B cell (primary cell): ENCODE measurements at regions of chr7 and their contacts with region 1.

Region 1: GRCh38 chr7:100705753-100706671 is at the start of gene POP7:
- DNase-seq: peak; percentile 98
- ATAC-seq: peak; percentile 94
- H3K4me3 ChIP-seq: peak within 1 kb of the TSS; percentile 57 to 96 (median 87)
- H3K4me3 Mint-ChIP-seq: peak within 1 kb of the TSS; percentile 94
- H3K27ac ChIP-seq: peak within 1 kb of the TSS; percentile 79 to 86
- H3K27ac Mint-ChIP-seq: peak within 1 kb of the TSS; percentile 96
- H3K4me1 ChIP-seq: peaks cover 8 to 20% of the 10 kb centered on the region in 2 donors
- H3K4me1 Mint-ChIP-seq: peaks cover 20% of the 10 kb centered on the region
- H3K27me3 ChIP-seq: no peaks in the 10 kb centered on the region
- H3K27me3 Mint-ChIP-seq: no peaks in the 10 kb centered on the region
- CTCF ChIP-seq: no peak
- total RNA-seq, gene POP7: 13.0 and 14.4 TPM in 2 replicates

Region 2: GRCh38 chr7:100400656-100401055 is 305.4 kb before region 1 on chr7:
- CTCF ChIA-PET with region 1: no interaction called
- POLR2A ChIA-PET with region 1: no interaction called
- intact Hi-C with region 1: no loop called
- DNase-seq: no peak
- ATAC-seq: no peak
- H3K4me3 ChIP-seq: no peak overlapping the region
- H3K4me3 Mint-ChIP-seq: no peak overlapping the region
- H3K27ac ChIP-seq: no peak overlapping the region
- H3K27ac Mint-ChIP-seq: no peak overlapping the region
- H3K4me1 ChIP-seq: peaks cover 15 to 26% of the 10 kb centered on the region in 2 donors
- H3K4me1 Mint-ChIP-seq: peaks cover 26% of the 10 kb centered on the region
- H3K27me3 ChIP-seq: no peaks in the 10 kb centered on the region
- H3K27me3 Mint-ChIP-seq: no peaks in the 10 kb centered on the region
- CTCF ChIP-seq: no peak

Region 3: DNA sequence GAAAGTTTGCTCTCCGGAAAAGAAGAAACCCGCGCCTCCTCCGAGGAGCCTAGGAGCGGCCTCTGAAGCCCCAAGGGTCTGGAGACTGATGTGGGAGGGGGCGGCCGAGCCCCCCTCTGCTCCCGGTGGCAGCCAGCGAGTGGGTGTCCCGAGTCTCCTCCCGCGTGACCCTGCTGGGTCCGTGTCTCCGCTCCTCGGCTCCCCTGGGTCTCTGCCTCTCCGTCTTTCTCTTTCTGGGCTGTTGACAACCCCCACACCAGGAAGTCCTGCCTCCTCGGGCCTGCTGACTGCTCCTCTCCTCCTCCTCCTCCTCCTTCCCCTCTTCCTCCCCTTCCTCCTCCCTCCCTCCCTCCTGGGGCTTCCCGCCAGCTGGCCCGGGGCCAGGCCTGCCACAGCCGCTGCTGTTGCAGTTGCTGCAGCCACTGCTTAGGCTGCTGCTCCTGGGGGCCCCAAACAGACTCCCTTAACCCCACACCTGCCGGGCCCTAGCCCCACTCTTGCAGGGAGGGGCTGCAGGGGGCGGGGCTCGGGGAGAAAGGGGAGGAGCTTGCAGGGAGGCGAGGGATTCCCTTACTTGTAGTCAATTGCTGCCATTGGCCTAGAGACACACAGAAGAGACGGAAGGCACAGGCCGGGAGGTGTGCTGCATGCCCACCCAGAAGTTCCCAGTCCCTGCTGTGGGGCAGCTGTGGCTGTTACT is 226.9 kb before region 1 on chr7 and contains the start of gene TSC22D4:
- CTCF ChIA-PET with region 1: interaction called, 4 read pairs
- POLR2A ChIA-PET with region 1: interaction called, 6 read pairs
- intact Hi-C with region 1: loop called (anchors 10 kb)
- DNase-seq: peak; percentile 92
- ATAC-seq: peak; percentile 70
- H3K4me3 ChIP-seq: peak within 1 kb of the TSS; percentile 90 to 99 (median 96)
- H3K4me3 Mint-ChIP-seq: peak within 1 kb of the TSS; percentile 97
- H3K27ac ChIP-seq: peak within 1 kb of the TSS; percentile 72 to 89
- H3K27ac Mint-ChIP-seq: peak within 1 kb of the TSS; percentile 91
- H3K4me1 ChIP-seq: peaks cover 34 to 51% of the 10 kb centered on the region in 2 donors
- H3K4me1 Mint-ChIP-seq: peaks cover 37% of the 10 kb centered on the region
- H3K27me3 ChIP-seq: no peaks in the 10 kb centered on the region
- H3K27me3 Mint-ChIP-seq: no peaks in the 10 kb centered on the region
- CTCF ChIP-seq: no peak
- total RNA-seq, gene TSC22D4: 92.8 and 95.0 TPM in 2 replicates

Region 4: DNA sequence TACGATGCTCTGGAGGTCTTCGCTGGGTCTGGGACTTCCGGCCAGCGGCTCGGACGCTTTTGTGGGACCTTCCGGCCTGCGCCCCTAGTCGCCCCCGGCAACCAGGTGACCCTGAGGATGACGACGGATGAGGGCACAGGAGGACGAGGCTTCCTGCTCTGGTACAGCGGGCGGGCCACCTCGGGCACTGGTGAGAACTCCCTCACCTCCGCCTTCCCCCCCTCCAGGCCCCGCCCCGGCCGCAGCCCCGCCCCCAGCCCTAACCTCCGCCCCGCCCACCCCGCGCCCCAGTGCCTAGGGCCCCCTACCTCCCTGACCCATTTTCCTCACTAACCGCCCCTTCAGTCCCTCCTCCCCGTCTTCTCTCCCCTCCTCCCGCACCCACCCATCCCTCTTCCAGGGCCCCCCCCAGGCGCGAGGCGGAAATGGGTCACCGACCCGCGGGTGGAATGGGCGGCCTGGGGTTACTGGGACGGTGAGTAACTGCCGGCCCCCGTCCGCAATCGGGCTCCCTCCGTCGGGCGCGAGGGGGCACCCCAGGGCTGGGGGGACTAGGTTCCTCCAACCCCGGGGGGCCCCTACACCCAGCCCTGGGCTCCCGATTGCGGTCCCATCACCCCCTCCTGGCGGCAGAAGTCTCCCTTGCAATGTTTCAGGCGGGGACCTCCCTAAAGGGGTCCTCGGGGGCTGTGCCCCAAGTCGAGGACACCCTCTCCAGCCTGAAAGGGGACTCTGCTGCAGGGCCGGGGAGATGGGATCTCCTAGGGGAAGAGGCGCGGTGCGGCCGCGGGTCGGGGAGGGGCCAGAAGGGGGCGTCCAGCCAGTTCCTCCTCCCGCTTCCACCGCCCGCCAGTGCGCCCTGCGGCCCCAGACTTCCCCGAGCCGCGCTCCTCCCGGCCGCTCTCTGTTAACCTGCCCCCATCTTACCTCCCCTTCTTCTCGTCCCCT is 101.7 kb before region 1 on chr7:
- CTCF ChIA-PET with region 1: interaction called, 7 read pairs
- POLR2A ChIA-PET with region 1: interaction called, 7 read pairs
- intact Hi-C with region 1: loop called (anchors 1 kb)
- DNase-seq: peak; percentile 85
- ATAC-seq: peak; percentile 75
- H3K4me3 ChIP-seq: peak overlapping the region; percentile 36 to 85 (median 75)
- H3K4me3 Mint-ChIP-seq: peak overlapping the region; percentile 90
- H3K27ac ChIP-seq: peak overlapping the region; percentile 43 to 54
- H3K27ac Mint-ChIP-seq: peak overlapping the region; percentile 80
- H3K4me1 ChIP-seq: peaks cover 15 to 25% of the 10 kb centered on the region in 2 donors
- H3K4me1 Mint-ChIP-seq: peaks cover 12% of the 10 kb centered on the region
- H3K27me3 ChIP-seq: no peaks in the 10 kb centered on the region
- H3K27me3 Mint-ChIP-seq: no peaks in the 10 kb centered on the region
- CTCF ChIP-seq: peak; percentile 68

Region 5: DNA sequence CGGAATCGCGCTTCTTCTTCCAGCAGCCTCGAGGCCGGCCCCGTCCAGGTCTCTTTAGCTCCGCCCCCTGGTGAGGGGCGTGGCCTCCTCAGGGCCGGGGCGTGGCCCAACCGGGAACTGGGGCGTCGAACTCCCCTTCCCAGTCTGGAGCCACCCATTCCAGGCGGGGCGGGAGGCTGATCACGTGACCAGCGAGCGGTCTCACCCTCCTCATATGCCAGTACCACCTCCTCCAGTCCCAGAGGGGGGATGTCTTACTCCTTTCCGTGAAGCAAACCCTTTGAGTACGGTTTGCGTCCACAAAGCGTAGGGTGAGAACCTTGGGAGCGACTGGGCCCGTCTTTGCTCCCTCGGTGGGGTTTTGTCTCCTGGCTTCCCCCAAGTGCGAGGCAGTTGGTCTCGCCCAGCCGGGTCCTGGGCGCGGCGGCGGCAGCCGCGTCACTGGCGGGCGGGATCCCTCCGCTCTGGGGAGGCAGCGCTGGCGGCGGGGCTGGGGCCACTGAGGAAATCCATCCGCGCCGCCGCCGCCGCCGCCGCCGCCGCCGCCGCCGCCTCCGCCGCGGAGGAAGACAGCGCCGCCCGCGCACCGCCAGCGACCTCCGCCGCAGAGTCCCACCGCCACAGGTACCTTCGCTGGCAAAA is 32.6 kb before region 1 on chr7 and contains the start of gene GNB2:
- CTCF ChIA-PET with region 1: interaction called, 14 read pairs
- POLR2A ChIA-PET with region 1: interaction called, 9 read pairs
- intact Hi-C with region 1: loop called (anchors 1 kb)
- DNase-seq: peak; percentile 99
- ATAC-seq: peak; percentile 65
- H3K4me3 ChIP-seq: peak within 1 kb of the TSS; percentile 53 to 99 (median 98)
- H3K4me3 Mint-ChIP-seq: peak within 1 kb of the TSS; percentile 96
- H3K27ac ChIP-seq: peak within 1 kb of the TSS; percentile 89 to 97
- H3K27ac Mint-ChIP-seq: peak within 1 kb of the TSS; percentile 97
- H3K4me1 ChIP-seq: peaks cover 0 to 6% of the 10 kb centered on the region in 2 donors
- H3K4me1 Mint-ChIP-seq: peaks cover 8% of the 10 kb centered on the region
- H3K27me3 ChIP-seq: no peaks in the 10 kb centered on the region
- H3K27me3 Mint-ChIP-seq: no peaks in the 10 kb centered on the region
- CTCF ChIP-seq: no peak
- total RNA-seq, gene GNB2: 127 TPM in 2 replicates

Region 6: GRCh38 chr7:100726996-100727761 is 21.2 kb after region 1 on chr7:
- CTCF ChIA-PET with region 1: interaction called, 30 read pairs
- POLR2A ChIA-PET with region 1: no interaction called
- intact Hi-C with region 1: loop called (anchors 1 kb)
- DNase-seq: no peak
- ATAC-seq: no peak
- H3K4me3 ChIP-seq: no peak overlapping the region
- H3K4me3 Mint-ChIP-seq: no peak overlapping the region
- H3K27ac ChIP-seq: no peak overlapping the region
- H3K27ac Mint-ChIP-seq: no peak overlapping the region
- H3K4me1 ChIP-seq: peaks cover 0 to 7% of the 10 kb centered on the region in 2 donors
- H3K4me1 Mint-ChIP-seq: peaks cover 3% of the 10 kb centered on the region
- H3K27me3 ChIP-seq: peaks cover 0 to 39% (median 8%) of the 10 kb centered on the region in 4 experiments
- H3K27me3 Mint-ChIP-seq: peaks cover 36% of the 10 kb centered on the region
- CTCF ChIP-seq: no peak

Region 7: GRCh38 chr7:100852048-100852872 is 146.2 kb after region 1 on chr7 and contains the start of gene SLC12A9:
- CTCF ChIA-PET with region 1: interaction called, 101 read pairs
- POLR2A ChIA-PET with region 1: interaction called, 13 read pairs
- intact Hi-C with region 1: no loop called
- DNase-seq: peak; percentile 91
- ATAC-seq: peak; percentile 90
- H3K4me3 ChIP-seq: peak within 1 kb of the TSS; percentile 55 to 87 (median 71)
- H3K4me3 Mint-ChIP-seq: peak within 1 kb of the TSS; percentile 95
- H3K27ac ChIP-seq: peak within 1 kb of the TSS; percentile 47 to 65
- H3K27ac Mint-ChIP-seq: peak within 1 kb of the TSS; percentile 93
- H3K4me1 ChIP-seq: peaks cover 11 to 23% of the 10 kb centered on the region in 2 donors
- H3K4me1 Mint-ChIP-seq: peaks cover 24% of the 10 kb centered on the region
- H3K27me3 ChIP-seq: no peaks in the 10 kb centered on the region
- H3K27me3 Mint-ChIP-seq: no peaks in the 10 kb centered on the region
- CTCF ChIP-seq: peak; percentile 96
- total RNA-seq, gene SLC12A9: 77.4 and 80.1 TPM in 2 replicates